ENCODE measurements at regions of chr19 and their contacts with region 1.

Region 1: GRCh38 chr19:35468637-35469036 is 20.6 kb downstream of the FFAR2 start:
- DNase-seq: peak; percentile 70
- H3K4me3 Mint-ChIP-seq: no peak overlapping the region
- H3K27ac Mint-ChIP-seq: no peak overlapping the region
- H3K4me1 Mint-ChIP-seq: no peaks in the 10 kb centered on the region
- H3K27me3 Mint-ChIP-seq: peaks cover 45% of the 10 kb centered on the region
- CTCF ChIP-seq: peak; percentile 71

Region 2: DNA sequence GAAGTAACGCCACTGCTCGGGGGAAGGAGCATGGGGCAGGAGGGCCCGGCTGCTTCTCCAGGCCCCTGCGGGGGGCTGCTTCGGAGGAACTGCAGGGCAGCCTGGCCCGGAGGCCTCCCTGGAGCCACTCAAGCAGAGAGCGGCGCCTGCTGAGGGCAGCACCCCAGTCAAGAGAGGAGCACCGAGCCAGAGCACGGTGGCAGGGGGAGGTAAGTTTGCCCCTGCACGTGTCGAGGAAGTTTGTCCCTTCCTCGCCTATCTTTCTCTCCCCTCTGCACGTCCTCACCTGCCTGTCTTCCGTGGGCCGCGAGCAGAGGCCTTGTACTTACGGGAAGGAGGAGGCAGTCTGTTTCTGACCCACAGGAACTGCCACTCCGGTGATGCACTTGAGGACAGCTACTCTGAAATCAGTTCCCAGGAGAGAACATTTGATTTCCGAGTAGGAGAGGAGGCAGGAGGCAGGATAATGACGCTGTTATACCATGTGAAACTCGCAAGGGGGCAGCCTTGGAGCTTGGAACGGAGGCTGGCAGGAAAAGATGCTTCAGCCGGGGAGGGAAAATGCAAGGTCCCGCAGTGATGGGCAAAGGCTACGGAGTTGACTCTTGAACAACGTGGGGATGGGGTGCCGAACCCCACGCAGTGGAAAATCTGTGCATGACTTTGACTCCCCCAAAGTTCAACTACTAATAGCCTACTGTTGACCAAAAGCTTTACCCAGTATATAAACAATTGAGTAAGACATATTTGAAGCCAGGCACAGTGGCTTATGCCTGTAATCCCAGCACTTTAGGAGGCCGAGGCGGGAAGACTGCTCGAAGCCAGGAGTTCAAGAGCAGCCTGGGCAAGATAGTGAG is 116.0 kb before region 1 on chr19:
- CTCF ChIA-PET with region 1: interaction called, 27 read pairs
- intact Hi-C with region 1: loop called (anchors 1 kb)
- DNase-seq: peak; percentile 80
- H3K4me3 Mint-ChIP-seq: no peak overlapping the region
- H3K27ac Mint-ChIP-seq: no peak overlapping the region
- H3K4me1 Mint-ChIP-seq: peaks cover under 1% of the 10 kb centered on the region
- H3K27me3 Mint-ChIP-seq: peaks cover 65% of the 10 kb centered on the region
- CTCF ChIP-seq: peak; percentile 86

Region 3: DNA sequence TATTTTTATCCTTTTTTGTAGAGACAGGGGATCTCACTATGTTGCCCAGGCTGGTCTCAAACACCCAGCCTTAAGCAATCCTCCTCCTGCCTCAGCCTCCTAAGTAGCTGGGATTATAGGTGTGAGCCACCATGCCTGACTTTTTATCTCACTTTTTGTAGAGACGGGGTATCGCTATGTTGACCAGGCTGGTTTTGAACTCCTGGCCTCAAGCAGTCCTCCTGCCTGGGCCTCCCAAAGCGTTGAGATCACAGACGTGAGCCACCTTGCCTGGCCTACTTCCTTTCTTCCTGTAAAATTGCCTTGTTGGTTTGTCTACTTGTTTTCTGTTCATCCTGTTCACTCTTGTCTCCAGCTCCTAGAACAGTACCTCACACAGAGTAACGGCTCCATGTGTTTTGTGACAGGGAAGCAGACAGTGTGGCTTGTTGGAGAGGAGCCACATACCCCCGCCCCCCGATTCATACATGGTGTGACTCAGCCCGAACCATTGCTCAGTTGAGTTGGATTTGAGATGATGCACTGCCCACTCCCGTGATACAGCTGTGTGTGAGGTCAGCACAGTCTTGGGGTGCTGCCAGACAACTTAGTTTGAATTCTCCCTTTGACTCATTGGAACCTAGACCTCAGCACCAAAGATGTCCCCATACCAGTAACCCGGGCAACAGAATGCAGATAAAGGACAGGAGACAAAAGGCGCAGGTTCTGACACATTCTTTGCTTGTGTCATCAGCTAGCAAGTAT is 63.6 kb before region 1 on chr19:
- CTCF ChIA-PET with region 1: no interaction called
- intact Hi-C with region 1: no loop called
- DNase-seq: peak; percentile 18
- H3K4me3 Mint-ChIP-seq: no peak overlapping the region
- H3K27ac Mint-ChIP-seq: no peak overlapping the region
- H3K4me1 Mint-ChIP-seq: no peaks in the 10 kb centered on the region
- H3K27me3 Mint-ChIP-seq: peaks cover 74% of the 10 kb centered on the region
- CTCF ChIP-seq: no peak

Region 4: DNA sequence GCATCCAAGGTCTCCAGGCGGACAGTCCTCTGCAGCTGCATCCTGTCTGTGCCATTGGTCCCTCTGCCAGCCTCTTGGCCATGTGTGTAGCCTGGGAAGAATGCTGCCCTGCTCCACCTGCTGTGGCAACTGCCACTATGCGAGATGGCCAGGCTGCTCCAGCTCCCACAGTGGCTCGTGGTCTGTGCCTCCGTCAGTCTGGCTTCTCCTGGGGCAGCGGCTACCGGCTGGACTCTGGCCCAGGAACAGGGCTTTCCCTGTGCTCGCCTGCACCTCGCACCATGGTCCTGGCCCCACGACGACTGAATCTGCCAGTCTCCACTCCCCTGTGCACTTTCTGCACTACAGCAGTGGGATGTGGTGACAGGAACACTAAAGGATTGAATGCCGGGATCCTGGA is 47.3 kb before region 1 on chr19:
- CTCF ChIA-PET with region 1: interaction called, 24 read pairs
- intact Hi-C with region 1: loop called (anchors 2 kb)
- DNase-seq: no peak
- H3K4me3 Mint-ChIP-seq: no peak overlapping the region
- H3K27ac Mint-ChIP-seq: no peak overlapping the region
- H3K4me1 Mint-ChIP-seq: peaks cover 9% of the 10 kb centered on the region
- H3K27me3 Mint-ChIP-seq: peaks cover 54% of the 10 kb centered on the region
- CTCF ChIP-seq: no peak

Region 5: DNA sequence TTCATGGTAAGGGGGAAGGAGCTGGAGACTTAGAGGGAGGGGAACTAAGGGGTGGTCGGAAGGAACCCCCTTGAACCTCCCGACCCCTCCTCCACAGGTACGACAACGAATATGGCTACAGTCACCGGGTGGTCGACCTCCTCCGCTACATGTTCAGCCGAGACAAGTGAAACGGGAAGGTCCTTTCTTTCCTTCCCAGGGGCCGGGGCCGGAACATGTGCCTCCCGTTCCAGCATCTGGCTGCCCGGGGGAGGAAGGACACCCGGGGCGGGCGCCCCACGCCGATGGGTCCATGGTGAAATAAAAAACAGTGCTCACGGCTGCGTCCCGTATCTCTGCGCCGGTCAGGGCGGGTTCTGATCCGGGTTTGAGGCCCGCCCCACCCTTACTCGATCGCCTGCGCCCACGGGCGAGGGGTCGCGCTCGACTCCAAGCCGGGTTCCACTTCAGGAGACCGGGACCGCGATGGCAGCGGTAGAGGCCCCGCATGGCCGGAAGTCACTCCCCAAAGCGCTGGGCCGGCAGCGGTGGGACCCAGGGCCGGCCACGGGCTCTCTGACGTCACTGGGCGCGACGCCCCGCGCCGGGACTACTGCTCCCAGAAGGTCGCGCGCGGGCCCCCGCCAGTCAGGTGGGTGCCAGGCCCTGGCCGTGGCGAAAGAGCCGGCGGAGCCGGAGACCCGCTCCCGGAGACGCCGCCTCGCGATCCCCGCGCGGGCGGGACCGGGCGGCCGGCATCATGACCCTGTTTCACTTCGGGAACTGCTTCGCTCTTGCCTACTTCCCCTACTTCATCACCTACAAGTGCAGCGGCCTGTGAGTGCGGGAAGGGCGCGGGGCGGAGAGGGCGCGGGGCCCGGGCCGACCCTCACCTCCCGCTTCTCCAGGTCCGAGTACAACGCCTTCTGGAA is 76.6 kb after region 1 on chr19 and contains the start of gene TMEM147:
- CTCF ChIA-PET with region 1: no interaction called
- intact Hi-C with region 1: no loop called
- DNase-seq: peak; percentile 98
- H3K4me3 Mint-ChIP-seq: peak within 1 kb of the TSS; percentile 96
- H3K27ac Mint-ChIP-seq: peak within 1 kb of the TSS; percentile 87
- H3K4me1 Mint-ChIP-seq: peaks cover 28% of the 10 kb centered on the region
- H3K27me3 Mint-ChIP-seq: no peaks in the 10 kb centered on the region
- CTCF ChIP-seq: no peak
- total RNA-seq, gene TMEM147: 114 and 118 TPM in 2 replicates